Activated CD4-positive, alpha-beta T cell treated with anti-CD3 and anti-CD28 coated beads, Interleukin-2, amount 10 ng/mL, durations not matched to agents 24 days and 14 days (primary cell): ENCODE measurements at regions of chr15 and their contacts with region 1.

Region 1: GRCh38 chr15:39782441-39783138 is at the start of gene FSIP1:
- DNase-seq: peak; percentile 99
- H3K4me3 Mint-ChIP-seq: peak within 1 kb of the TSS; percentile 77
- H3K27ac Mint-ChIP-seq: peak within 1 kb of the TSS; percentile 51
- H3K4me1 Mint-ChIP-seq: peaks cover 30% of the 10 kb centered on the region
- H3K27me3 Mint-ChIP-seq: peaks cover 5% of the 10 kb centered on the region
- total RNA-seq, gene FSIP1: 0.37 and 0.47 TPM in 2 replicates

Region 2: GRCh38 chr15:39140060-39140604 is 642.5 kb before region 1 on chr15:
- intact Hi-C with region 1: loop called (anchors 10 kb)
- DNase-seq: peak; percentile 75
- H3K4me3 Mint-ChIP-seq: no peak overlapping the region
- H3K27ac Mint-ChIP-seq: peak overlapping the region; percentile 84
- H3K4me1 Mint-ChIP-seq: peaks cover 44% of the 10 kb centered on the region
- H3K27me3 Mint-ChIP-seq: no peaks in the 10 kb centered on the region

Region 3: DNA sequence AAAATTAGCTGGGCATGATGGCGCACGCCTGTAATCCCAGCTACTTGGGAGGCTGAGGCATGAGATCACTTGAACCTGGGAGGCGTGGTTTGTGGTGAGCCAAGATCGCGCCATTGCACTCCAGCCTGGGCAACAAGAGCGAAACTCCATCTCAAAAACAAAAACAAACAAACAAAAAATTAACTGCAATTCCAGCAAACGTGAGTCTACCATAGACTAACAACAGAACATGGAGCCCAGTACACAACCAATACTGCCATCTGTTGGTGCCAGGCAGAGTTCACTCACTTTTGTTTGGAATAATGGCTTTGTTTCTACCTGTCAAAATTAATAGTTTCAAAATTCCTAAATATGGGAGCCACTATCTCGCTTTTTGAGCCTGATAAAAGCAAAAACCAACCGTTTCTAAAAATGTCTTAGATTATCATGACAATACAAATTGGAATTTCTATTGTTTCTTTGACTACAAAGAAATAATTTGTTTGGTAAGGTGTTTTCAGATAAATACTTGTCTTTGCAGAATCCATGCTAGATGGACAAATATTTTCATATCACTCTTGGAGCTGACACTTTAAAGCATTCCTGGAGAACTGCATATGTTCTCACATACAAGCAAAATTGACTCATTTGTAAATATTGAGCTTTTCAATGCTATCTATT is 92.4 kb after region 1 on chr15:
- intact Hi-C with region 1: loop called (anchors 2 kb)
- DNase-seq: peak; percentile 69
- H3K4me3 Mint-ChIP-seq: no peak overlapping the region
- H3K27ac Mint-ChIP-seq: no peak overlapping the region
- H3K4me1 Mint-ChIP-seq: peaks cover 3% of the 10 kb centered on the region
- H3K27me3 Mint-ChIP-seq: peaks cover 16% of the 10 kb centered on the region

Region 4: DNA sequence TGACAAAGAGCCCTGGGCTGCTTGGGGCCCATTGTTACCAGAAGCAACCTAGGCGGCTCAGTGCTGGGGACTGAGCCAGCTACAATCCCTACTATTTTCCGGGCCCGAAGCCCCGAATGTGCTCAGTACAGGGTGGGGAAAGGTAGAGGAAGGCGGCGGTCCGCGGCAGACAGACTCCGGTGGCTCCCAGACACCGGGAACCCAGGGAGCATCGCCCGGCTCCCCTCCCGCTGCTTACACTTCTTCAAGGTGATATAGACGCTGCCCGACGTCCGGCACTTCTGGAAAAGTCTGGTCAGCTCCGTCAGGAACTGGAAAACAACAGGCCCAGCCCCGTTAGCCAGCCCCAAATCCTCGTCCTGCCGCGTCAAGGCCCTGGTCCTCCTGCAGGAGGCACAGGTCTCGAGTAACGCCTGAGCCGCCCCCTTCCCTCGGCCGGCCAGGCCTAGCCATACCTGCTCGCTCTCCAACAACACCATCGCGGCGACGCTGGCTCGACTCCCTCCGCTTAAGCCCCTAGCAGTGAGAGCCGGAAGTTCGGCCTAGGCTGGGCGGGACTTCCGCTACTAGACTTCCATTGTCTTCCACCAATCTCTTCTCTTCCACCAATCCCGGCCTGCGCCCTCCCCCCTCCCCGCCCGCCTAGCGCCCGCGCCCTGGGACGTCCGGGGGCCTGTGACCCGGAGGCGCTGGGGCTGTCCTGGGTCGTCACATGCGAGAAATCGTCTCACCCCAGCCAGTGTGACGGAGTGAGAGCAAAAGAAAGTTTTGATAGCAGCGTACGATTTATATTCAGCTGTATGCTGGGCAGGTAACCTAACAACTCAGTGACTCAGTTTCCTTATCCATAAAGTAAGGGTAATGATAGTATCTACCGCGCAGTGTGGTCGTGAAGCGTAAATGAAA is 256.3 kb after region 1 on chr15 and contains the start of gene SRP14:
- intact Hi-C with region 1: loop called (anchors 2 kb)
- DNase-seq: peak; percentile 97
- H3K4me3 Mint-ChIP-seq: peak within 1 kb of the TSS; percentile 99
- H3K27ac Mint-ChIP-seq: peak within 1 kb of the TSS; percentile 97
- H3K4me1 Mint-ChIP-seq: peaks cover 37% of the 10 kb centered on the region
- H3K27me3 Mint-ChIP-seq: no peaks in the 10 kb centered on the region
- total RNA-seq, gene SRP14: 153 and 155 TPM in 2 replicates

Region 5: DNA sequence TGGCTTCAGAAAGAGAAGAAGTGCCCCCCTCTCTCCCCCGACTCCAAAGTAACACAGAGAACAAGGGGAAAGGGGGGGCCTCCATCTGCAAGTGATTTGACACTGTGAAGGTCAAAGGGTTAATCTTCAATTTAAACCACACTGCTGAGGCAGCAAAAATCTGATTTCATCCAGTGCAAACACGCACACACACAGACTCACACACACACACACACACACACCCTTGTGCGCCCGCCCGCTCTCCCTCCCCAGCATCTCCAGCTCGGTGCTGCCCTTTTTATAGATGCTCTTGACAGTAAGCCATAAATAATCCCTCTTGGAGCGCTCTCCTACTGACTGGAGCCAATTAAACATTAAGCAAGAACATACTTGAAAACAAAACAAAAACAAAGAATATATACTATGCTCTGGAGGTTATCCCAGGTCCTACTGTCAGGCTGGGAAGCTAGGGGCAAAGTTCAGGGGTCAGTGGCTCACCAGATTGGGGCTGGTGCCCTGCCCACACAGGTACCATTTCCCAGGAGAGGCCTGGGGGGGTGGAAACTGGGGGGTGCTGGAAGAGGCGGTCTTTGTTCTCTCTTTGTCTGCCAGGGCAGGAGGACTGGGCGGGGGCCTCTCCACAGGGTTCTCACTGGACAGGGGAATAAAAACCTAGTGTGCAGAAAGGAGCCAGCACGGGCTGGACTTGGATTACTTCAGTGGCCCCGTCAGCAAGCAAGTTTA is 309.8 kb after region 1 on chr15:
- intact Hi-C with region 1: no loop called
- DNase-seq: no peak
- H3K4me3 Mint-ChIP-seq: no peak overlapping the region
- H3K27ac Mint-ChIP-seq: no peak overlapping the region
- H3K4me1 Mint-ChIP-seq: peaks cover 37% of the 10 kb centered on the region
- H3K27me3 Mint-ChIP-seq: no peaks in the 10 kb centered on the region

Region 6: GRCh38 chr15:40160689-40161688 is 378.4 kb after region 1 on chr15 and contains the start of gene BUB1B:
- intact Hi-C with region 1: loop called (anchors 1 kb)
- DNase-seq: peak; percentile 99
- H3K4me3 Mint-ChIP-seq: no peak within 1 kb of the TSS
- H3K27ac Mint-ChIP-seq: no peak within 1 kb of the TSS
- H3K4me1 Mint-ChIP-seq: peaks cover 13% of the 10 kb centered on the region
- H3K27me3 Mint-ChIP-seq: no peaks in the 10 kb centered on the region
- total RNA-seq, gene BUB1B: 69.3 and 73.1 TPM in 2 replicates

Region 7: DNA sequence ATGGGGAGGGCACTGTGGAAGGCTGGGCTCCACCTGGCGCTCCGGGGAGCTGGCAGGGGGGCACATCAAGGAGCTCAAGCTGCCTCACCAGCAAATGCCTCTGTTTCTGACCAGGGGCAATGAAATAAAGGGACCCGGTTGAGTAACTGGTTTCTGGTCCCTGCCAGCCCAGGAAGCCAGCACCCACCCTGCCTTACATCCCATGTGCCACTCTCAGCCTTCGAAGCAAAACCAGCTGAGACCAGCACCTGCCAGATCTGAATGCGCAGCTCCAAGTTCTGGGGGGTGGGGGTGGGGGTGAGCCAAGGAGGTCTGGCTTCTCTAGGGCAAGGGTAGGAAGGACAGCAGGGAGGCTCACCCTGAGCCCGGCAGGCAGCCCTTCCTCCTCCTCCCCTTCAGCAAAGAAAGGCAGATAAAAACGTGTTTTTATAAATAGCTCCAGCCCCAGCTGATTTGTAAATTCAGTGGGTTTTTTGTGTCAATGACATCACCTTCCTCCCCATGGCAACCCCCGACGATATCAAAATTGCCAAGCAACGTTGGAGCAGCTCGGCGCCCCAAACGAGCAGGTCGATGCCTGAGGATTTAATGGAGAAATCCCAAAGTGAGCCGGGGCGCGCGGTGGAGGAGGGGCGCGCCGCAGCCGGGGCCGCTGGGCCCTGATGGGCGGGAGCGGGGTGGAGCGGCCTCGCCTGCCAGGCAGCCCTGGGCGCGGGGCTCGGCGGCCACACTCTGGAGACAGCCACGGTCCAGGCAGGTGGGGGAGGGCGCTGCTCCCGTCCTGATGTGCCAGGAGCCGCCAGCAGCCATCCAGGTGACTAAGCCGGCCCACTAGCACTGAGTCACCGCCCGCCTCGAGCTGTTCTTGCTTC is 456.2 kb after region 1 on chr15 and contains the start of gene PAK6:
- intact Hi-C with region 1: no loop called
- DNase-seq: peak; percentile 76
- H3K4me3 Mint-ChIP-seq: peak within 1 kb of the TSS; percentile 45
- H3K27ac Mint-ChIP-seq: peak within 1 kb of the TSS; percentile 27
- H3K4me1 Mint-ChIP-seq: peaks cover 7% of the 10 kb centered on the region
- H3K27me3 Mint-ChIP-seq: peaks cover 17% of the 10 kb centered on the region
- total RNA-seq, gene PAK6: 0.33 and 0.54 TPM in 2 replicates